Left colon (tissue), 2 donors: ENCODE measurements at regions of chr16 and their contacts with region 1.

Region 1: GRCh38 chr16:50210266-50211038 is 55.9 kb upstream of the ADCY7 start:
- DNase-seq: peak; percentile 80 to 84
- ATAC-seq: peak; percentile 82

Region 2: DNA sequence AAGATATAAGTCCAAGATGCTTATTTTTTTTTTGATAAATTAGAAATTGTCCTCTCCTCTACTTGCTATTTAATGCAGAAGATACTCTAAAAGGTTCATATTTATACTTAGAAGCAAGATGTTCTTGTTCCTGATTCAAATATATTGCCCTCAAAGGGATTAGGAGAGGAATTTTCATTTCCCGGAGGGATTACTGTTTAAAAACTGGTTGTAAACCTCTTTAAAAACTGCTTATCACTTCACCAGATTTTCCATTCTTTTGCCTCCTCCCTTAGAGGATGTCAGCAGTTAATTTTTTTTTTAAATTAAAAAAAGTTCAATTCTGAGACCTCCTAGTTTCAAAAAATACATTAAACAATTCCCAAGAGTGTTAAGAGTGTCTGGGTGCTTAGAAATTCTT is 54.5 kb before region 1 on chr16:
- intact Hi-C with region 1: loop called in 1 of 2 experiments (anchors 5 kb)
- DNase-seq: no peak
- ATAC-seq: no peak

Region 3: DNA sequence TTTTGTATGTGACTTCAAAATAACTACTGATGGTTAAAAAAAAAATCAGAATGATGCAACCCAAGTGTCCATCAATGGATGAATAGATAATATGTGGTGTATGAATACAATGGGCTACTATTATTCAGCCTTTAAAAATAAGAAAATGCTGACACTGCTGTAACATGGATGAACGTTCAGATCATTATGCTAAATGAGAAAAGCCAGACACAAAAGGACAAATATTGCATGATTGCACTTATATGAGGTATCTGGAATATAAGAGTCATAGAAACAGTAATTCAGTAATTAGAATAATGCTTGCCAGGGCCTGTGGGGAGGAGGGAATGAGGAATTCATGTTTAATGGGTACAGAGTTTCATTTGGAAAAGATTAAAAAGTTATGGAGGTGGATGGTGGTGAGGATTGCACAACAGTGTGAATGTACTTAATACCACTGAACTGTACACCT is 31.9 kb before region 1 on chr16:
- intact Hi-C with region 1: no loop called
- DNase-seq: no peak
- ATAC-seq: no peak

Region 4: GRCh38 chr16:50326949-50327402 is 116.5 kb after region 1 on chr16:
- intact Hi-C with region 1: no loop called
- DNase-seq: peak in 1 of 2 donors; percentile 38
- ATAC-seq: peak; percentile 64